Right ventricle myocardium inferior (tissue), 1 donor: ENCODE measurements at regions of chr2 and their contacts with region 1.

Region 1: DNA sequence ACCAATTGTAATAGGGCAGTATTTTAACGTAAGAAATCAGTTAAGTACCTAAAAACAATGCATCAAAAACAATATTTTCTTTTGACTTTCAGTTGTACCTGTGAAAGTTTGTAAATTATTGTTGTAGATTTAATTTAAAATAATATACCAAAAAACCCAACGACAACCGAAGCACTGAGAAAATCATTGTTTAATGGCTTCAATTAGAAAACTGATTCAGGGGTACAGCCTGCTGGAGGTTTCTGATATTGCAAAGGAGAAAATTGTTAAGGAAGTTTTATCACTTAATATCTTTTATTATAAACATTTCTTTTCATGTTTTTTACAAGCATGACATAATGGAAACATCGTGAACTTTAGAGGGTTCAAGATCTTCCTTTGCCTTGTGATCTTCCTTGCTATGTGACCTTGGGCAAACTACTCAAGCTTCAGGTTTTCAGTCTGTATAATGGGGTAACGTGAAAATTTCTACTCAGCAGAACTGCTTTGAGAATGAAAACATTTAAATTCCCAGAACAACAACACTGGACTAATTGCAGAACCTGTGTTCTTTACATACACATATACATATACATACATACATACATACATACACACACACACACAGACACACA is 76.3 kb upstream of the GLS start:
- DNase-seq: no peak
- ATAC-seq: no peak

Region 2: DNA sequence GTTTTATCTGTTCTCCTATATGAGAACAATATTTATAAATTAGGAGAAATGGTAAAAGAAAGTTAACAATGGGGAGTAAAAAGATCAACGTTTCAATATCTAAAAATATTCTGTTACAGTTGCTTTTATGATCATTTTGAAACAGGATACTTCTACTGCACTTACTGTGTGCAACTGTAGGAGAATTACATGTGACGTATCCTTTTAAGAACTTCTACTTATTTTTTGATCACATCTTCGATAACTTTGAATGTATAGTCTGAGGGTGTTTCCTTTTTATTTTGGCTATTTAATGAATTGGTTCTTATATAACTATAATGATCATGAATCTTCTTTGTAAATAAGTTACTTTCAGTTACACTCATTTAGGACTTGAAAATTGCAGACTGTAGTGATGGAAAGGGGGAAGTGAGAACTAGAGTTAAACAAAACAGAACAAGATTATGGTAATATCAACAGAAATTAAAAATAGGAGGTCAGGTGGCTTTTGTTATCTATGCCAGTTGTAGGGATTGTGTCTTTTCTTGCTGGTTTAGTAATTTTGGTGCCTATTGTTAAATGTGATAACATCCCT is 851.7 kb before region 1 on chr2:
- intact Hi-C with region 1: no loop called
- DNase-seq: no peak
- ATAC-seq: no peak

Region 3: DNA sequence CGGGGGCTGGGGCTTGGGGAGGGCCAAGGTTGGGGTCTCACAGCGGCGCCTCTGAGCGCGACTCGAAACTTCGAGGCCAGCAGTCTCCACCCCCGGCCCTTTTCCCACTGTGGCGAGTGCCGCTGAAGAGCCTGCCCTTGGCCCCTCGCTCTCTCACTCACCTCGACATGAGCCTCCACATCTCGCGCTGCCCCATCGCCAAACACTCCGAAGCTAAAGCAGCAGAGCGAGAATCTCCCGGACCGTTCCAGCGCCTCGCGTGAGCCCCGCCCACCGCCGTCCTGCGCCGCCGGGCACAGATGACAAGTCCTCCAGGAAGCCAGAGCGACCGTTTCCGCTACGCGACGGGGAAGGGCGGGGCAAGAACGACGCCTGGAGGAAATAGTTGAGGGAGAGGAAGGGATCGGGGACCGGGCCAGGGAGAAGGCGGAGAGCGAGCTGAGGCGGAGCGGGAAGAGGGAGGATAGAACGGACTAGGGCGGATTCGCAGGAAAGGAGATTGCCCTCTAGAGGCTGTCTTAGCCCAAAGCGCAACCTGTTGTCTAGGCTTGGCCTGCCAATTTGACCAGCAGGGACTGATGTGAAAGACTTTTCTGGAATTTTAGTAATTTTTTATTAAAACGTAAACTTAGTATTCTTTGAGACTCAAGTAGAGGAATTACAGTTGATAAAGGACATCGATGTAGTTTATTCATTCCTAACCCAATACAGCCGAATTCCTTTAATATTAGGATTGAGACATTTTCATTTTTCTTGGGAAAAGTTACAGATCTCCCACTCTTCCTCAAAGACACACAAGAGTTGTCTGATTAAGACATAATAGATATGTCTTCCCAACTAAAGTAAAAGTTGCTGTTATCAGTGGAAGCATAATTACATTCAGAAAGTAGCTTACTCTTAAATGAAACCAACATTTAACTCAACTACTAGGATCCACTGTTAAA is 484.5 kb before region 1 on chr2 and contains the start of gene HIBCH:
- intact Hi-C with region 1: loop called (anchors 10 kb)
- DNase-seq: peak; percentile 99
- ATAC-seq: peak; percentile 99
- total RNA-seq, gene HIBCH: 21.2 TPM

Region 4: DNA sequence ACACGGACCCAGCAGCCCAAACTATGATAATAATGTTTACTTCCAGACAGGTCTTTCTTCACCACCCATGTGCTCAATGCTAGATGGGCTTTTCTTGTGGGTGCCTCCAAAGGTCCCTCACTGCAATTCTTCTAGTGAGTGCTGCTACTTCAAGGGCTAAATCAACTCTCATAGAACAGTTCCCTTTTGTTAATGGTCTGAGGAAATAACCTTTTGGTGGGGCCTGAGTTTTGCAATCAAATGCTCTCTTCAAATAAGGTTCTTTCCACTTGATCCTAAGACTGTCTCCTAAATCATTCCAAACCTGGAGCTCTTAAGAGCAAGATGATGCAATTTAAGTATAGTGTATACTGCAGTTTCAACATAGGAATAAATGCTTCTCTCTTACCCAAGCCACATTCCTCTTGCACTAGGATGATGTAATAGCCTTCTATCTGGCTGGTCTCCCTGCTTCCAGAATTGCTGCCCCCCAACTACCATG is 275.7 kb before region 1 on chr2:
- intact Hi-C with region 1: loop called (anchors 10 kb)
- DNase-seq: no peak
- ATAC-seq: no peak

Region 5: GRCh38 chr2:190896477-190896876 is 92.2 kb after region 1 on chr2:
- intact Hi-C with region 1: no loop called
- DNase-seq: no peak
- ATAC-seq: peak; percentile 37